Gastrocnemius medialis (tissue), 4 donors: ENCODE measurements at regions of chr6 and their contacts with region 1.

Region 1: GRCh38 chr6:32796848-32797776 is 19.7 kb downstream of the HLA-DOB start:
- DNase-seq: peak; percentile 12 to 55
- ATAC-seq: peak; percentile 65 to 73
- H3K4me3 ChIP-seq: peak overlapping the region in 3 of 4 donors; percentile 17 to 37 (median 30)
- H3K27ac ChIP-seq: no peak overlapping the region
- H3K4me1 ChIP-seq: no peaks in the 10 kb centered on the region
- H3K27me3 ChIP-seq: peaks cover 9 to 13% (median 13%) of the 10 kb centered on the region in 3 donors
- CTCF ChIP-seq: peak; percentile 84 to 93 (median 87)
- POLR2A ChIP-seq: no peak

Region 2: DNA sequence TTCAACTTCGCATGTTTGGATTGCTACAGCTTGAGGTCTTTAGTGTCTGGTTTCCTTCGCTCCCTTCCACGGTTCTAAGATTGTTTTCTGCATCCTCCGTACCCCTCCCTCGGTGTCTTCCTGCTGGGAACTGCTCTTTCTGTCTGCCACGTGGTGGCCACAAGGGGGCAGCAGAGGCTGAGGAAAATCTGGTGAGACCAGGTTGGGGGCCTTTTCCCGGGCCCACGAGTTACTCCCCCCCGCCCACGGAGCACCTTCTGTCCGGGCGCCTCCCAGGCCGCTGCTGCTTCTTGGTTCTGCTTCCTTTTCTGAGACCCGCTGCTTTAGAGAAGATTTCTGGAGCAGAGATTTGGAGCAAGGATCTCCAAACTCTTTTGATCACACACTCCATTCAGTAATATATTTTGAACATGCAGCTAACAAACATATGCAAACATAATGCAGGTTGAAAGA is 552.1 kb before region 1 on chr6:
- in situ Hi-C with region 1: loop called in 2 of 4 experiments (anchors 25 kb)
- intact Hi-C with region 1: loop called (anchors 5 kb)
- DNase-seq: peak; percentile 39 to 63
- ATAC-seq: peak; percentile 74 to 81
- H3K4me3 ChIP-seq: peak overlapping the region in 1 of 4 donors; percentile 33
- H3K27ac ChIP-seq: peak overlapping the region; percentile 17 to 72 (median 60)
- H3K4me1 ChIP-seq: peaks cover 5 to 6% of the 10 kb centered on the region in 2 donors
- H3K27me3 ChIP-seq: no peaks in the 10 kb centered on the region
- CTCF ChIP-seq: peak; percentile 70 to 89 (median 86)
- POLR2A ChIP-seq: no peak

Region 3: GRCh38 chr6:32298663-32299267 is 498.3 kb before region 1 on chr6:
- in situ Hi-C with region 1: no loop called
- intact Hi-C with region 1: no loop called
- DNase-seq: no peak
- ATAC-seq: no peak
- H3K4me3 ChIP-seq: no peak overlapping the region
- H3K27ac ChIP-seq: no peak overlapping the region
- H3K4me1 ChIP-seq: no peaks in the 10 kb centered on the region
- H3K27me3 ChIP-seq: no peaks in the 10 kb centered on the region
- CTCF ChIP-seq: no peak
- POLR2A ChIP-seq: no peak

Region 4: GRCh38 chr6:32413427-32414047 is 383.6 kb before region 1 on chr6:
- in situ Hi-C with region 1: loop called in 3 of 4 experiments (anchors 5 to 10 kb)
- intact Hi-C with region 1: loop called (anchors 1 kb)
- DNase-seq: peak; percentile 42 to 46
- ATAC-seq: peak; percentile 45 to 71
- H3K4me3 ChIP-seq: no peak overlapping the region
- H3K27ac ChIP-seq: no peak overlapping the region
- H3K4me1 ChIP-seq: peaks cover 0 to 3% of the 10 kb centered on the region in 2 donors
- H3K27me3 ChIP-seq: peaks cover 0 to 11% (median 6%) of the 10 kb centered on the region in 3 donors
- CTCF ChIP-seq: peak; percentile 64 to 94 (median 85)
- POLR2A ChIP-seq: no peak

Region 5: DNA sequence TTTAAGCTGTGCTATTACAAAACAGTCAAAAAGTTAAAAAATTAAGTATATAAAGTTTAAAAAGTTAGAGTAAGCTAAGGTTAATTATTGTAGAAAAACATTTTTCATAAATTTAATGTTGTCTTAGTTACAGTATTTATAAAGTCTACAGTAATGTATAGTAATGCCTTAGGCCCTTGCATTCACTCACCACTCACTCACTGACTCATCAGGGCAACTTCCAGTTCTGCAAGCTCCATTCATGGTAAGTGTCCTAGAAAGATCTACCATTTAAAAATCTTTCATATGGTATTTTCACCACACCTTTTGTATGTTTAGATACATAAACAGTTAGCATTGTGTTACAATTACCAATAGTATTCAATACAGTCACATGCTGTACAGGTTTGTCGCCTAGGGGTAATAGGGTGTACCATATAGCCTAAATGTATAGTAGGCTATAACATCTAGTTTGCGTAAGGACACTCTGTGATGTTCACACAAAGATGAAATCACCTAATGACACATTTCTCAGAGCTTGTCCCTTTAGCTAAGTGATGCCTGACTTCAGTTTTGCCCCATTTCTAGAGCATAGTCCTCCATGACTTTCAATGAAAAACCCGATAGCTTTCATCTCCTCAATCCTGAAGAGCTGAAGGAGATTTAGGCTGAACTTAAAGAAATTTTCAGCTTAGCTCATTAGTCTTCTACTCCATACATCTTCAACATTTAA is 372.4 kb before region 1 on chr6:
- in situ Hi-C with region 1: loop called (anchors 5 to 10 kb)
- intact Hi-C with region 1: no loop called
- DNase-seq: no peak
- ATAC-seq: no peak
- H3K4me3 ChIP-seq: no peak overlapping the region
- H3K27ac ChIP-seq: no peak overlapping the region
- H3K4me1 ChIP-seq: no peaks in the 10 kb centered on the region
- H3K27me3 ChIP-seq: peaks cover 2 to 9% (median 4%) of the 10 kb centered on the region in 3 donors
- CTCF ChIP-seq: no peak
- POLR2A ChIP-seq: no peak

Region 6: GRCh38 chr6:33425668-33426577 is 628.8 kb after region 1 on chr6:
- in situ Hi-C with region 1: no loop called
- intact Hi-C with region 1: no loop called
- DNase-seq: peak; percentile 65 to 71
- ATAC-seq: peak; percentile 59 to 69
- H3K4me3 ChIP-seq: peak overlapping the region; percentile 62 to 79 (median 72)
- H3K27ac ChIP-seq: peak overlapping the region; percentile 83 to 91 (median 90)
- H3K4me1 ChIP-seq: peaks cover 19 to 29% of the 10 kb centered on the region in 2 donors
- H3K27me3 ChIP-seq: no peaks in the 10 kb centered on the region
- CTCF ChIP-seq: peak; percentile 21 to 72 (median 47)
- POLR2A ChIP-seq: peak in 1 of 2 donors; percentile 25